WTC11 (cell line): ENCODE measurements at regions of chr17 and their contacts with region 1.

Region 1: GRCh38 chr17:48636177-48637018 is 10.2 kb upstream of the HOXB9 start:
- DNase-seq: peak; percentile 99
- ATAC-seq: peak; percentile 89
- H3K4me3 Mint-ChIP-seq: peak overlapping the region; percentile 45
- H3K27ac Mint-ChIP-seq: no peak overlapping the region
- H3K4me1 Mint-ChIP-seq: peaks cover 18% of the 10 kb centered on the region
- H3K27me3 Mint-ChIP-seq: peaks cover 100% of the 10 kb centered on the region; the same call in 1 of the 2 replicates
- CTCF ChIP-seq: peak; percentile 62

Region 2: DNA sequence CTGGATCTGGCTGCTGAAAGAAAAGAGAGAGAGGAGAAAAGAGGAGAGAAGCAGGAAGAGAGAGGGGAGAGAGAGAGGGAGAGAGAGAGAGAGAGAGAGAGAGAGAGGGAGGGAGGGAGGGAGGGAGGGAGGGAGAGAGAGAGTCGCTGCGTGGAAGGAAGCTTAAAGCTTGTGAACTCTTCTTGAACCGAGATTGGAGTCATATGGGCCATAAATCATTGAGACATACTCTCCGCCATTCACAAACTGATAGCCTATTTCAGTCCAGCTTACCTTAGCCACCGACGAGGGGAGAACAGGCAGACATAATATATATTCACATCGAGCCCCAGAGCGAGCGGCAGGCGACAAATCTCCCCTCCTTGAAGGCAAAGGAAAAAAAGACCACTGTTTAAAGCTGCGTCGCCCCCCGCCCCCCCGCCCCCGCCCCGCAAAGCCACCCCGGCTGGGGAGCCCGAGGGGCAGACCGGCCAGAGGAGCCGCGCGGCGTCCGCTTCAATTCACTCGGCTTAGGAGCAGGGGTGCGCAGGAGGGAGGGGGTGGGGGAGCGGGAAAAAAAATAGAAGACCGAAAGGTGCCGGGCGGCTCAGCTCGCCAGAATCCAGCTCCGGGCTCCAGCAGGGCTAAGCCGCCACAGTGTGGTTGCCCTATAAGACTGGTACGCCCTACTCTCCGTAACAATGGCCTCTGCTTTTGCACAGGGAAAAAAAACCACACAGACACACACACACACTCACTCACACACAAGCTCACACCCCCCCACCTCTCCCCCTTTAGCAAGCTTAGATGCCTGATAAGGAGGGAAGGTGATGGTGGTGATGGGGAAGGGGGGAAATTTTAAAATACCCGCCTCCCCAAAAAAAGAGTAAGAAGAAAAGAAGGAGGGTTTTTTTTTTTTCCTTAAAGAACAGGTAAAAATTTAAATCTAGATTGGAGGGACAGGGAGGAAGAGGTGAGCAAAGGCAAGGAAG is 80.9 kb before region 1 on chr17:
- CTCF ChIA-PET with region 1: interaction called, 11 read pairs
- POLR2A ChIA-PET with region 1: no interaction called
- DNase-seq: no peak
- ATAC-seq: peak; percentile 7; the same call in 1 of the 2 replicates
- H3K4me3 Mint-ChIP-seq: peak overlapping the region; percentile 58
- H3K27ac Mint-ChIP-seq: no peak overlapping the region
- H3K4me1 Mint-ChIP-seq: peaks cover 38% of the 10 kb centered on the region
- H3K27me3 Mint-ChIP-seq: peaks cover 100% of the 10 kb centered on the region; the same call in 1 of the 2 replicates
- CTCF ChIP-seq: no peak

Region 3: GRCh38 chr17:48618256-48618897 is 18.0 kb before region 1 on chr17:
- CTCF ChIA-PET with region 1: interaction called, 27 read pairs
- POLR2A ChIA-PET with region 1: no interaction called
- DNase-seq: peak; percentile 92
- ATAC-seq: peak; percentile 29
- H3K4me3 Mint-ChIP-seq: 0 out of 2 replicates have a peak overlapping the region, but pooled peaks have one; percentile 25
- H3K27ac Mint-ChIP-seq: no peak overlapping the region
- H3K4me1 Mint-ChIP-seq: peaks cover 25% of the 10 kb centered on the region
- H3K27me3 Mint-ChIP-seq: peaks cover 100% of the 10 kb centered on the region; the same call in 1 of the 2 replicates
- CTCF ChIP-seq: peak; percentile 92

Region 4: DNA sequence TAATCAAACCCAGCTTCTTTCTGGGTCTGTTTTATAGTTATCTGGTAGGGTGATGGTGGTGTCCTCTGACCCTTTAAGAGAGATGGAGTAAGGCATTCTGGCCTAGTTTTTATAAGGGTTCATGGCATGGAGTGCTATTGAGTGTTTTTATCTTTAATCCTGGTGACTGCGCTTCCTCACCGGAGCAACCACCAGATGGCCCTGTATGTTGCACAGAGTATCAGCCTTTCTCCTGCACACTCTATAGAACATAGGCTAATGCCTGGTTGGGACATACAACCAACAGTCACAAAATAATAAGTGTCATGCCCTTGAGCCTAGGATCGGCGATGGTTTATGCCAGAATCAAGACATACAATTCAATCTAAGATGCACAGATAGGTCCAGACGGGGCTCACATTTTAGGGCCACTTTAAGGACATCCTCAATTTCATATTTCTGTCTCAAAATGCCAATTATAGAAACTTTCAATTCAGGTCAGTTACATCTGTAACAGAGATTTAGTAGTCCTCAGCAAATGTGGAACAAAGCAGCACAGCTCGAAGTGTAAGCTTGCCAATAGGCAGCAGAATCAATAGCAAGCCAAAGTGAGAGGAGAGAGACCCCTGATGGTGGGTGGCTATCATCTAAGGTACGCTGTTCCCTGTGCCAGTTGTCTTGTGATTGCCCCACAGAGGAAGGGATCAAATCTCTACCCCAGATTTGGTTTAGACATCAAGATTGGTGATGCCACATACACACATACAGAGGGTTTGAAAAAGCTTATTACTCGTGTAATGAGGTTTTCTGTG is 26.9 kb after region 1 on chr17:
- CTCF ChIA-PET with region 1: interaction called, 10 read pairs
- POLR2A ChIA-PET with region 1: no interaction called
- DNase-seq: no peak
- ATAC-seq: peak; percentile 72
- H3K4me3 Mint-ChIP-seq: no peak overlapping the region
- H3K27ac Mint-ChIP-seq: no peak overlapping the region
- H3K4me1 Mint-ChIP-seq: no peaks in the 10 kb centered on the region
- H3K27me3 Mint-ChIP-seq: peaks cover 35% of the 10 kb centered on the region
- CTCF ChIP-seq: no peak

Region 5: GRCh38 chr17:48718761-48719641 is 82.6 kb after region 1 on chr17:
- CTCF ChIA-PET with region 1: interaction called, 25 read pairs
- POLR2A ChIA-PET with region 1: no interaction called
- DNase-seq: peak; percentile 43
- ATAC-seq: peak; percentile 3; the same call in 1 of the 2 replicates
- H3K4me3 Mint-ChIP-seq: peak overlapping the region; percentile 85
- H3K27ac Mint-ChIP-seq: peak overlapping the region; percentile 91
- H3K4me1 Mint-ChIP-seq: peaks cover 52% of the 10 kb centered on the region
- H3K27me3 Mint-ChIP-seq: peaks cover 100% of the 10 kb centered on the region
- CTCF ChIP-seq: no peak

Region 6: DNA sequence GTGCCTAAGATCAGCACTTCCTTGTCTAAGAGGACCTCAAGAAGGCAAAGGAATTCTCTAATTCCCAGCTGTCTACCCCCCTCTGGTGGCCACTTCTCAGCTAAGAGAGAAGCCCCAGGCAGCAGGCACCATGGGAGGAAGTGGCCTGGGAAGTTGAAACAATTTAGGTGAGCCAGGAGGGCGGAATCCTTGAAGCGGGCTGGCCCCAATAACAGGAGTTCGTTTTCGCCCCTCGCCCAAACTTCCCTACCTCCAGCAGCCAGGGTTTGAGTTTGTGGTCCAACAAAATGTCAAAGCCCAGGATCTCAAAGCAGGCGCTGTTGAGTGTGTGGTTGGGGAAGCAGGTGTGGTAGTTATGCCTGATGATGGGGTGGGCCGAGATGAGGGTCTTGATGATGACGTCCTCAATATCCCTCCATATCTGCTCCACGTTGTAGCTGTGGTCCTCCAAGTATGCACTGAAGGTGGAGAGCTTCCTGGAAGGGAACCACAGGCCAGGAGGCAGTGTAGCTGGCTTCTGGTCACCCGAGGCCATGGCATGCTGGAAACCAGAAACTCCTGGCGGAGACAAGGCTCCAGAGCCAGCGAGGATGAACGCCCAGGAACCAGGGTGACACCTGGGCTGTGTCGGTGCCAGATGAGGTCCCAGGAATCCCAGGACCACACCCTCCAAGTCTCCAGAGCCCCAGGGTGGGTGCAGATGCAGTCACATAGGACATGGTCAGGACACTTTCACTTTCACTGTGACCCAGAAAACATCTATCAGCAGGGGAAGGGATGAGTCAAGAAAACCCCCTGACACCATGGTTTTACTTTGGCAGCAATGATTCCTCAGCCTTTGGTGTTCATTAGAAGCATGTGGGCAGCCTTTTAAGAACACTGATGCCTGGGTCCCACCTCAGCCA is 155.0 kb after region 1 on chr17:
- CTCF ChIA-PET with region 1: interaction called, 22 read pairs
- POLR2A ChIA-PET with region 1: no interaction called
- DNase-seq: peak; percentile 85
- ATAC-seq: peak; percentile 92
- H3K4me3 Mint-ChIP-seq: no peak overlapping the region
- H3K27ac Mint-ChIP-seq: no peak overlapping the region
- H3K4me1 Mint-ChIP-seq: peaks cover 9% of the 10 kb centered on the region
- H3K27me3 Mint-ChIP-seq: peaks cover 2% of the 10 kb centered on the region; the same call in 1 of the 2 replicates
- CTCF ChIP-seq: peak; percentile 45; the same call in 1 of the 2 replicates